Psoas muscle (tissue), 8 donors: ENCODE measurements at regions of chr18 and their contacts with region 1.

Region 1: GRCh38 chr18:5879479-5879882 is 15.8 kb downstream of the TMEM200C start:
- DNase-seq: no peak
- ATAC-seq: peak in 1 of 4 donors; percentile 45
- H3K4me3 ChIP-seq: no peak overlapping the region
- H3K27ac ChIP-seq: no peak overlapping the region
- H3K4me1 ChIP-seq: no peaks in the 10 kb centered on the region
- H3K27me3 ChIP-seq: peaks cover 0 to 2% (median 0%) of the 10 kb centered on the region in 3 donors
- CTCF ChIP-seq: peak; percentile 60

Region 2: GRCh38 chr18:6221602-6222014 is 342.1 kb after region 1 on chr18:
- intact Hi-C with region 1: loop called in 1 of 2 experiments (anchors 10 kb)
- DNase-seq: no peak
- ATAC-seq: no peak
- H3K4me3 ChIP-seq: no peak overlapping the region
- H3K27ac ChIP-seq: no peak overlapping the region
- H3K4me1 ChIP-seq: no peaks in the 10 kb centered on the region
- H3K27me3 ChIP-seq: no peaks in the 10 kb centered on the region
- CTCF ChIP-seq: no peak

Region 3: GRCh38 chr18:6482198-6482977 is 602.9 kb after region 1 on chr18:
- intact Hi-C with region 1: loop called in 1 of 2 experiments (anchors 10 kb)
- DNase-seq: peak; percentile 75 to 88
- ATAC-seq: peak; percentile 51 to 89 (median 82)
- H3K4me3 ChIP-seq: no peak overlapping the region
- H3K27ac ChIP-seq: no peak overlapping the region
- H3K4me1 ChIP-seq: no peaks in the 10 kb centered on the region
- H3K27me3 ChIP-seq: no peaks in the 10 kb centered on the region
- CTCF ChIP-seq: peak; percentile 40

Region 4: GRCh38 chr18:6885992-6886796 is 1006.7 kb after region 1 on chr18:
- intact Hi-C with region 1: loop called in 1 of 2 experiments (anchors 10 kb)
- DNase-seq: no peak
- ATAC-seq: peak; percentile 36 to 86 (median 69)
- H3K4me3 ChIP-seq: no peak overlapping the region
- H3K27ac ChIP-seq: no peak overlapping the region
- H3K4me1 ChIP-seq: peaks cover under 1% of the 10 kb centered on the region
- H3K27me3 ChIP-seq: no peaks in the 10 kb centered on the region
- CTCF ChIP-seq: peak; percentile 74